ENCODE measurements at regions of chr22 and their contacts with region 1.

Region 1: DNA sequence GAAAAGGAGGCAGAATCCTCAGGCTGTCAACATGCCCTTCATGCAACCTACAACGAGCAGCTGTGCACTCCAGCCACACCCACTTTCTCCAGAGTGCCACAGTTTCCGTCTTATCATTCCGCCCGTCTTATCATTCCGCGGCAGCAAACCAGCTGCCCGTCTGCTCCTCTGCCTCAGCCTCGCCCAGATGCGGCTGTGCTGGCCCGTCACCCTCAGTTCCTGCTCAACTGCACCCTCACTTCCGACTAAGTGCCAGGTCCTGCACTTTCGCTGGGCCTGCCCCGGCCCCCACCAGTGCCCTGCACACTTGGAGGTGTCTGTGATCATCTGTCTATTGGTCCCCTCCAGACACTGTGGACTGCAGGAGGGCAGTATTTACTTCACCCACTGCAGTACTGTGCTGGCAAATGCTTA is 43.7 kb downstream of the MICAL3 start:
- DNase-seq: no peak
- ATAC-seq: no peak
- H3K4me3 ChIP-seq: no peak overlapping the region
- H3K27ac ChIP-seq: no peak overlapping the region
- H3K4me1 ChIP-seq: no peaks in the 10 kb centered on the region
- H3K27me3 ChIP-seq: no peaks in the 10 kb centered on the region

Region 2: DNA sequence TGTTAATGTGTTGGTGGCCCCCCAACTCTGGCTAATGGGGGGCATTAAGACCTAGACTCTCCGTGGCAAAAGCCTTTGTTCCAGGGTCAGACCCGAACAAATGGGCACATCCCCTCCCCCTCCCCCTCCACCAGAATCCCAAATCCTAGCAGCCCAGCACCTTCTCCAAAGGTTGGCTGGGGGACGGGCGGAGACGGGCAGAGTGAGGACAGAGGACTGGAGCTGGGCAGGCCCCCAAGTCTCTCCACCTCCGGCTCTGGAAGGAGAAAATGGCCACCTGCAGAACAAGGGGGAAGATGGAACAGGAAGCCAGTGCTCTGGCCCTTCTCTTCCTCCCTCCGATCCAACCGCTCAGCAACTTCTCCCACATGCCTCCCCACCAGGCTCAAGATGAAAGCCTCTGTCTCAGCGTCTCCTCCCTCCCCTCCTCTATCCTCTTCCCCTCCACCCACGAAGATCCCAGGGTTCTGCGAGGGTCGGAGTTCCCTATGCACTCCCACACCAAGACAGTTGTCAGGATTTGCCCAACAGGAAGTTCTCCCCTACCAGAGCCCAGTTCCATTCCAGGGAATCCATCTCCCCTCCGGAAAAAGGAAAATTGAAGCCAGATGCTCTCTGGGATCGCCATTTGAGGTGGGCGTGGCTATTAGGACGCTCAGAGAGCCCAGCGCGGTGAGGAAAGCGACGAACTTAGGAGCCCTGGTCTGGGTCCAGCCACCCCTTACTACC is 781.5 kb before region 1 on chr22:
- intact Hi-C with region 1: no loop called
- DNase-seq: no peak
- ATAC-seq: peak; percentile 58
- H3K4me3 ChIP-seq: peak overlapping the region in 1 of 2 donors; percentile 38
- H3K27ac ChIP-seq: no peak overlapping the region
- H3K4me1 ChIP-seq: no peaks in the 10 kb centered on the region
- H3K27me3 ChIP-seq: no peaks in the 10 kb centered on the region

Region 3: DNA sequence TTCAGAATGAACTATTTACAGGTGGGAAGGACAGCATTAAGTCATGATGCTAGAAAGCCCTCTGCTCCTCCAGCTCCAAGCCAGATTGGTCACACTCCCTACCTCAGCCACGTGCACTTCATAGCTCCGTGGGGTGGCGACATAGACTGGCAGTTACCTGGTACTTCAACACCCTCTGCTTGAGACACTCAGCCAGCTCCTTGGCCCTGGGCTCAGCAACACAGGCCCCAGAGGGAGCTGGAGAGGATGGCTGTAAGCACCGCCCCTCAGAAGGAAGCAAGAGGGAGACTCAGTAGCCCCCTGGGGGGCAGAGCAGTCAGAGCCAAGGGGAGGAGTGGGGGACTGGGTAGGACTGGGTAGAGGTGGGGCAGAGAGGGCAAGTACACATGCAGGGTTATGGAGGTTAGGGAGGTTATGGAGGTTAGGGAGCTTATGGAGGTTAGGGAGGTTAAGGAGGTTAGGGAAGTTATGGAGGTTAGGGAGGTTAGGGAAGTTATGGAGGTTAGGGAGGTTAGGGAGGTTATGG is 104.3 kb before region 1 on chr22:
- intact Hi-C with region 1: no loop called
- DNase-seq: no peak
- ATAC-seq: no peak
- H3K4me3 ChIP-seq: no peak overlapping the region
- H3K27ac ChIP-seq: no peak overlapping the region
- H3K4me1 ChIP-seq: no peaks in the 10 kb centered on the region
- H3K27me3 ChIP-seq: no peaks in the 10 kb centered on the region

Region 4: DNA sequence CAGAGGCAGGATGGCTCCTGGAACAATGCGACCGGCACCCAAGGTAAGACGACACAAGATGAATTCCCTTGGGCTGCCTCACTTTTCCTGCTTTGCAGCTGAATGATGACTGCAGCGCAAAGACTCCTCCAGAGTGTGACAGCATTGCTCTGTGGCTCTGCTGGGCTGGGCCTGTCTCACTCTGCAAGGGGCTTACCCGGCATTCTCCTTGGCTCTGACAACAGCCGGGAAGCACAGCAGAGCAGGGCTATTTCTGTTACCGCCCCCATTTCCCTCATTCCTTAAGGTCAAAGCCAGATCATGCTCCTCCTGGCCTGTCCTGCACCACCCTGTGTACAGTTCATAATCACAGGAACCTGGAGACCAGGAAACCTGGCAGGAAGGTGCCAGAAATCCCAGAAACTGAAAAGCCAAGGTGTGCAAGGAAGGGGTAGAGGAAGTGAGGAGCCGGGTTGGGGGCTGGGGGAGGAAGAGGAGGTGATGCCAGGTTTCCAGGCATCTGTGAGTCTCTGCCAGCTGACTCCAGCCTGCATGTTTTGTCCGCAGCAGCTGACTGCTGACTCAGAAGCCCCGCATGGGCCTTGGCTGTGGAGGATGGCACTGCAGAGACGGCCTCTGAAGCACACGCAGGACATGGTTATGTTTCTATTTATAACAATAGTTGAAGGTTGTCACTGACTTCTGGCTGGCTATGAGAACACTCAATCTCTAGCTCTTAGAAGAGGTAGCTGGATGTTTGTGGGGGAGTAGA is 69.9 kb before region 1 on chr22:
- intact Hi-C with region 1: loop called in 1 of 2 experiments (anchors 5 kb)
- DNase-seq: peak; percentile 87 to 89
- ATAC-seq: peak; percentile 87
- H3K4me3 ChIP-seq: no peak overlapping the region
- H3K27ac ChIP-seq: peak overlapping the region in 1 of 2 donors; percentile 76
- H3K4me1 ChIP-seq: no peaks in the 10 kb centered on the region
- H3K27me3 ChIP-seq: no peaks in the 10 kb centered on the region

Measured in aorta (tissue), 5 donors.